CD4-positive, alpha-beta memory T cell (primary cell): ENCODE measurements at regions of chr1 and their contacts with region 1.

Region 1: DNA sequence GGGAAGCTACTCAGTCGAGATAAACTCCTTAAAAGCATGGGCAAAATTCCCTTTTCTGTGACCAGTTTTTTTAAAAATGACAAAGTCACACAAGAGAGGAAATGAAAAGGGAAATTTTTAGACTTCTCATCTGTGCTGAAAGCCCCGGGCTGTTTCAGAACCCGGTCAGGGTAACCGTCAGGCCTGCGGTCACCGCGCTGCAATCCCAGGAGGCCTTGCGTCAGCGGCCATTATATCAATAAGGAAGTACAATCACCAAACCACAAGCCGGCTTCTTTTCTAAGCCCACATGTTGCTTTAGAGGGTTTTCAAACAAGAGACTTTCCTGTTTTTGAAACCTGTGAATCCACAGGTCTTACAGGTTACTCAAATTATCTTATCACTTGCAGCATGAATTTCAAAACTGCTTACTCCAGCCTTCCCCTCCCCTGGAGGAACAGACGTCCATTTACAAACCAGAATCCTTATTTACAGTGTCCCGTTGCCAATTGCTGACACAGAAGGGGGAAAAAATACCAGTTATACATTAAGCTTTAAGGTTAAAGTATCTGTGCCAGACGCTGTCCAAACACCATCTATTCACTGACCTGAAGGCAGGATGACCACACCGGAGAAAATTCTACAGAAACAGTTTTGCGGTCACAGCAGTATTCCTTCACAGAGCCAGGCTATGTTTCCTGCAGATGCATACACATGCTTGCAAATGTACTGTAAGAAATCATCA is 165.3 kb downstream of the TOMM20 start:
- DNase-seq: peak; percentile 85 to 94 (median 86)
- H3K4me3 ChIP-seq: peak overlapping the region; percentile 14 to 46
- H3K4me3 Mint-ChIP-seq: peak overlapping the region; percentile 41 to 89 (median 84)
- H3K27ac ChIP-seq: peak overlapping the region; percentile 89
- H3K27ac Mint-ChIP-seq: peak overlapping the region; percentile 90 to 98 (median 96)
- H3K4me1 ChIP-seq: peaks cover 72% of the 10 kb centered on the region
- H3K4me1 Mint-ChIP-seq: peaks cover 58 to 76% (median 64%) of the 10 kb centered on the region in 4 donors
- H3K27me3 ChIP-seq: no peaks in the 10 kb centered on the region
- H3K27me3 Mint-ChIP-seq: no peaks in the 10 kb centered on the region

Region 2: DNA sequence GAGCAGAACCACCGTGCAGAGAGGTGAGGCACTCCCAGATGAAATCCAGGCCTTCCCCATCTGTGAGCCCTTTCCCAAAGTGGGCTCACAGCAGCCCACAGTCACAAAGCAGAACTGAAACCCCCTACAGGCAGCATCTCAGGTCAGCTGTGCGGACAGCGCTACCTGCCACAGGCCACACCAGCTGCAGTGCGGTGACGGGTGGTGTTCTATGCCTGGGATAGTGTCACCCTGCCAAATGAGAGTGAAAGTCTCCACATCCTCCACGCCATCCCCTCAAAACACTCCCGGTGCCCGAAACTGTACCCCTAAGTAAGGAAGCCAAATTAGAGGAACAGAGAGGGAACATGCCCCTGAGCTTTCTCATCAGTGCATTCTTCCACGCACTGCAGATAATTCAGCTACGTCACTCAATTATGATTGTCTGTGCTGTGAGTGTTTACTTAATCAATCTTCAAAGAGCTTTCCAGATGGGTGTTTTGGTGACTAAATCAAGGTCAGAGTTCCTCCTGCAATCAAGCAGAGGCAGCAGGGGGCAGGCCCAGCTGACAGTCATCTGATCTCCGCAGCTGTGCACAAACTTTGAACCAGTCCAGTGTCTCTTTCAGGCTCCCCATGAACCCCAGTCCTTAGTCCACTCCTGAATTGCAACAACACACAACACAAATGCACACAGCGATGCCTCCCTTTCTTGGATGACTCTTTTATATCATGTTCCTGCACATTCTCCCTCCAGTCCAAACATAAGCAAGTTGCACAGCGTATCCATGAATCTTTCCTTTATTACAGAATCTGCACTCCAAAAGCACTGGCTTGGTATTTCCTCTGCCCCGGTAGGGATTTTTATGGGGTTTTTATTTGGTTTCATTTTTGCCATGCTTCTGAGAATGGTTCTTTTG is 15.3 kb after region 1 on chr1:
- CTCF ChIA-PET with region 1: interaction called, 23 read pairs
- POLR2A ChIA-PET with region 1: interaction called, 86 read pairs
- intact Hi-C with region 1: loop called (anchors 1 kb)
- DNase-seq: peak; percentile 72 to 87 (median 77)
- H3K4me3 ChIP-seq: peak overlapping the region in 1 of 2 donors; percentile 33
- H3K4me3 Mint-ChIP-seq: peak overlapping the region; percentile 43 to 93 (median 79)
- H3K27ac ChIP-seq: peak overlapping the region; percentile 88
- H3K27ac Mint-ChIP-seq: peak overlapping the region; percentile 96 to 99 (median 97)
- H3K4me1 ChIP-seq: peaks cover 65% of the 10 kb centered on the region
- H3K4me1 Mint-ChIP-seq: peaks cover 40 to 83% (median 53%) of the 10 kb centered on the region in 4 donors
- H3K27me3 ChIP-seq: no peaks in the 10 kb centered on the region
- H3K27me3 Mint-ChIP-seq: no peaks in the 10 kb centered on the region

Region 3: GRCh38 chr1:234997201-234997895 is 34.0 kb after region 1 on chr1:
- CTCF ChIA-PET with region 1: no interaction called
- POLR2A ChIA-PET with region 1: no interaction called
- intact Hi-C with region 1: no loop called
- DNase-seq: no peak
- H3K4me3 ChIP-seq: no peak overlapping the region
- H3K4me3 Mint-ChIP-seq: peak overlapping the region in 1 of 8 donors; percentile 37
- H3K27ac ChIP-seq: no peak overlapping the region
- H3K27ac Mint-ChIP-seq: no peak overlapping the region
- H3K4me1 ChIP-seq: peaks cover 5% of the 10 kb centered on the region
- H3K4me1 Mint-ChIP-seq: peaks cover 0 to 1% (median under 1%) of the 10 kb centered on the region in 4 donors
- H3K27me3 ChIP-seq: no peaks in the 10 kb centered on the region
- H3K27me3 Mint-ChIP-seq: no peaks in the 10 kb centered on the region

Region 4: DNA sequence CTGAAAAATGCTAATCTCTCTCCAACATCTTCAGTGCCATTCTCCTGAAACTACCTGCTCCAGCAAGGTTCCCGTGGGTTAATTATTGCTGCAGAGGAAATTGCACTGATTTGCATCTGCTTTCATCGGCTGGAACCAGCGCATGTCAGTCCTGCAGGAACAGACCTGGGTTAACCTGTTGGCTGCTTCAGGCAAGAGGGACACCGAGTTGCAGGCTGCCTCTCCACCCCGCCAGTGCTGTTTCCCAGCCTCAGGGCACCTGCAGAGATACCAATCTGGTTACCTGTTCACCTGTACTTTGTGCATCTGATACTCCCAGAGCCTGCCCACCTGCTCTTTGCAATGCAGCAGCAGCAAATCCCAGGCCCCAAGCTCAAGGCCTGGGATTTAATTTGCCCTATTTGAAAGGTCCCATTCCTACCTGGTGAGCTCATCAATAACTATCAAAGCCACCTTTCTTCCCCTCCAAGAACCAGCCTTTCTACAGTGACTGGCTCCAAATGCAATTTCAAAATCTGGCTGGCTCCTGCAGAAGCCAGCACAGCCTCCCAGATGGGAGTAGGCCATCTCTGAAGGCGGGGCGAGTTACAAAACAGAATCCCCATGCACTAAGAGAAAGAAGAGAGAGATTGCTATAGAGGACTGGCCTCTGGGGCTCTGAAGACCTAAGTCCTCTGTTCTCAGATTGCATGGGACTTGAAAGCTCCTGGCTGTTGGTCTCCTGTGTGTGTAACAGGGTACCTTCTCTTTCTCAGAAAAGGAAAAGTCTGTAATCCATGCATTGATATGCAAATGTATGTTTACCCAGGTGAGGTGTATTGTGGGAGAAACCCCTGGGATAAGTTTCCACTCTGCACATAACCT is 97.5 kb after region 1 on chr1:
- CTCF ChIA-PET with region 1: no interaction called
- POLR2A ChIA-PET with region 1: no interaction called
- intact Hi-C with region 1: no loop called
- DNase-seq: no peak
- H3K4me3 ChIP-seq: no peak overlapping the region
- H3K4me3 Mint-ChIP-seq: no peak overlapping the region
- H3K27ac ChIP-seq: no peak overlapping the region
- H3K27ac Mint-ChIP-seq: peak overlapping the region in 1 of 7 donors; percentile 15
- H3K4me1 ChIP-seq: peaks cover 14% of the 10 kb centered on the region
- H3K4me1 Mint-ChIP-seq: peaks cover 12 to 31% (median 18%) of the 10 kb centered on the region in 4 donors
- H3K27me3 ChIP-seq: no peaks in the 10 kb centered on the region
- H3K27me3 Mint-ChIP-seq: no peaks in the 10 kb centered on the region

Region 5: DNA sequence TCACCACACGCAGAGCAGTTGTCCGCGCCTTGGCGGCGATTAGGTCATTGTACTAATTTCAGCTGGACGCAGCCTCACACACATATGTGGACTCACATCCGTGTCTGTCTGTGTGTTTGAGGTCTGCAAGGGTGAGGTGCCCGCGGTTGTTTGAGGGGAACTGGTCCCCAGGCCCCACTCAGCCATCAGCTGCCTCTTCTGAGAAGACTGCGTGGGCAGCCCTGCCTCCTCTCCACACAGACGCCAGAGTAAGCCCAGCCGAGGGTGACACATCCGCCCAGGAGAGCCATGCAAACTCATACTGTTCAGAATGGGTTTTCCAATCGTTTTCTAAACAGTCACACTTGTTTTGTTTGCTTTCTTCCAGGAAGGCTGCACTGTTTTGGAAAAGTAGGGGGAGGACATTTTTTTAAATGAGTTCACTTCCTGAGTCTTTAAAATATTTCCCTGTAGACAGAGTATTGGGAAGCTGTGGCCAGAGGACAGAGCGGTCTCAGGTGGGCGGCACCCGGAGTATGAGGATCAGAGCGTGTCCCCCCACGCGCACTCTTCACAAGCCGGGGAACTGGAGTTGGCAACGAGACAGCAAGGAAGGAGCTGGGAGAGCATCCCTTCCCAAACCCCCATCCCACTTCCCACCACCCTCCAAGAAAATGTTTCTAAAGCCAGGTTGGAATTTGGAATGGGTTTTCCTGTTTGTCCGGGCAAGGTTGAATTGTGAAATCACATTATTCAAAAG is 112.0 kb after region 1 on chr1:
- CTCF ChIA-PET with region 1: no interaction called
- POLR2A ChIA-PET with region 1: interaction called, 3 read pairs
- intact Hi-C with region 1: loop called (anchors 5 kb)
- DNase-seq: peak; percentile 22 to 66 (median 32)
- H3K4me3 ChIP-seq: peak overlapping the region in 1 of 2 donors; percentile 16
- H3K4me3 Mint-ChIP-seq: peak overlapping the region; percentile 75 to 93 (median 82)
- H3K27ac ChIP-seq: peak overlapping the region; percentile 1
- H3K27ac Mint-ChIP-seq: peak overlapping the region; percentile 22 to 93 (median 88)
- H3K4me1 ChIP-seq: peaks cover 25% of the 10 kb centered on the region
- H3K4me1 Mint-ChIP-seq: peaks cover 23 to 32% (median 27%) of the 10 kb centered on the region in 4 donors
- H3K27me3 ChIP-seq: no peaks in the 10 kb centered on the region
- H3K27me3 Mint-ChIP-seq: no peaks in the 10 kb centered on the region